Mammary epithelial cell (primary cell): ENCODE measurements at regions of chrX and their contacts with region 1.

Region 1: GRCh38 chrX:12701628-12702027 is 89.6 kb upstream of the PRPS2 start:
- DNase-seq: peak; percentile 69
- H3K4me3 ChIP-seq: no peak overlapping the region
- H3K27ac ChIP-seq: no peak overlapping the region
- H3K4me1 ChIP-seq: peaks cover 6% of the 10 kb centered on the region
- H3K27me3 ChIP-seq: no peaks in the 10 kb centered on the region
- CTCF ChIP-seq: peak; percentile 53 to 77

Region 2: DNA sequence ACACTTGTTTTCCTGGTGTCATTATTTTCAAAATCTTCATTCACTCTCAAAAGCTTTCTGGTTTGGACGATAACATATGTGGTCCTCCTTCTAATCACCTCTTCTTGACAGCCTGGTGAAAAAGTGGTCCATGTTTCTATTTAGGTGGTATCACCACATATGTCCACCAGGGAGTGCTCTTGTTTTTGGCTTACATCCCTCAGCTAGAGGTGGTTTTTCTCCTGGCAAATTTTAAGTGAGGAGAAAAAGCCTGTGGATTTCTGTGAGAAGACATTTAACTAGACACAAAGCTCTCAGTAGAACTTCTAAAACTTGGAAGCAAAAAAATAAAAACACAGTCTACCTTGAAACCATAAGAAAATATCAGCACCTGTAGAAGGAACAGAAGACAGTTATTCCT is 621.4 kb before region 1 on chrX:
- CTCF ChIA-PET with region 1: no interaction called
- dilution Hi-C with region 1: no loop called
- in situ Hi-C with region 1: loop called in 1 of 2 experiments (anchors 10 kb)
- intact Hi-C with region 1: loop called (anchors 1 kb)
- DNase-seq: peak; percentile 46
- H3K4me3 ChIP-seq: no peak overlapping the region
- H3K27ac ChIP-seq: no peak overlapping the region
- H3K4me1 ChIP-seq: no peaks in the 10 kb centered on the region
- H3K27me3 ChIP-seq: no peaks in the 10 kb centered on the region
- CTCF ChIP-seq: peak; percentile 42 to 72

Region 3: DNA sequence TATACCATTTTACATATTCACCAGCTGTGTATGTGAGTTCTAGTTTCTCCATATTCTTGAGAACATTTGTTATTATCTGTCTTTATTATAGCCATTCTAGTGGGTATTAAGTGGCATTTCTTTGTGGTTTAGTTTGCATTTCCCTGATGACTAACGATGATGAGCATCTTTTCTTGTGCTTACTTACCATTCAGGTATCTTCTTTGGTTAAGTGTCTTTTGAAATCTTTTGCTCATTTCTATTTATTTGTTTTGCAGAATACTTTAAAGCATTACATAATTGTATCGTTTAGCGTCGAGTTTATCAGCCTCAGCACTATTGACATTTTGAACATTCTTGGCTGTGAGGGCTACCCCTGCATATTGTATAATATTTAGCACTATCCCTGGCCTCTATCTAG is 478.0 kb before region 1 on chrX:
- CTCF ChIA-PET with region 1: no interaction called
- dilution Hi-C with region 1: no loop called
- in situ Hi-C with region 1: no loop called
- intact Hi-C with region 1: loop called (anchors 10 kb)
- DNase-seq: peak; percentile 87
- H3K4me3 ChIP-seq: no peak overlapping the region
- H3K27ac ChIP-seq: no peak overlapping the region
- H3K4me1 ChIP-seq: peaks cover 5% of the 10 kb centered on the region
- H3K27me3 ChIP-seq: no peaks in the 10 kb centered on the region
- CTCF ChIP-seq: no peak

Region 4: GRCh38 chrX:12497832-12498591 is 203.6 kb before region 1 on chrX:
- CTCF ChIA-PET with region 1: no interaction called
- dilution Hi-C with region 1: no loop called
- in situ Hi-C with region 1: no loop called
- intact Hi-C with region 1: loop called (anchors 1 kb)
- DNase-seq: no peak
- H3K4me3 ChIP-seq: no peak overlapping the region
- H3K27ac ChIP-seq: no peak overlapping the region
- H3K4me1 ChIP-seq: no peaks in the 10 kb centered on the region
- H3K27me3 ChIP-seq: no peaks in the 10 kb centered on the region
- CTCF ChIP-seq: peak; percentile 44 to 71

Region 5: GRCh38 chrX:12580548-12580947 is 121.1 kb before region 1 on chrX:
- CTCF ChIA-PET with region 1: no interaction called
- dilution Hi-C with region 1: no loop called
- in situ Hi-C with region 1: no loop called
- intact Hi-C with region 1: loop called (anchors 5 kb)
- DNase-seq: peak; percentile 98
- H3K4me3 ChIP-seq: no peak overlapping the region
- H3K27ac ChIP-seq: peak overlapping the region; percentile 82
- H3K4me1 ChIP-seq: peaks cover 34% of the 10 kb centered on the region
- H3K27me3 ChIP-seq: no peaks in the 10 kb centered on the region
- CTCF ChIP-seq: no peak

Region 6: GRCh38 chrX:12771445-12772069 is 69.9 kb after region 1 on chrX:
- CTCF ChIA-PET with region 1: no interaction called
- dilution Hi-C with region 1: no loop called
- in situ Hi-C with region 1: no loop called
- intact Hi-C with region 1: loop called (anchors 1 kb)
- DNase-seq: no peak
- H3K4me3 ChIP-seq: no peak overlapping the region
- H3K27ac ChIP-seq: no peak overlapping the region
- H3K4me1 ChIP-seq: no peaks in the 10 kb centered on the region
- H3K27me3 ChIP-seq: peaks cover 2% of the 10 kb centered on the region
- CTCF ChIP-seq: peak; percentile 44 to 54

Region 7: GRCh38 chrX:12901486-12901885 is 199.9 kb after region 1 on chrX:
- CTCF ChIA-PET with region 1: no interaction called
- dilution Hi-C with region 1: no loop called
- in situ Hi-C with region 1: loop called in 1 of 2 experiments (anchors 10 kb)
- intact Hi-C with region 1: loop called (anchors 1 kb)
- DNase-seq: peak; percentile 48
- H3K4me3 ChIP-seq: no peak overlapping the region
- H3K27ac ChIP-seq: no peak overlapping the region
- H3K4me1 ChIP-seq: no peaks in the 10 kb centered on the region
- H3K27me3 ChIP-seq: no peaks in the 10 kb centered on the region
- CTCF ChIP-seq: peak; percentile 79